ENCODE measurements at regions of chr7 and their contacts with region 1.

Region 1: GRCh38 chr7:143240291-143241168 is 18.7 kb downstream of the TAS2R40 start:
- DNase-seq: peak; percentile 85
- H3K4me3 Mint-ChIP-seq: no peak overlapping the region
- H3K27ac Mint-ChIP-seq: no peak overlapping the region
- H3K4me1 Mint-ChIP-seq: peaks cover 22% of the 10 kb centered on the region
- H3K27me3 Mint-ChIP-seq: peaks cover 1% of the 10 kb centered on the region

Region 2: DNA sequence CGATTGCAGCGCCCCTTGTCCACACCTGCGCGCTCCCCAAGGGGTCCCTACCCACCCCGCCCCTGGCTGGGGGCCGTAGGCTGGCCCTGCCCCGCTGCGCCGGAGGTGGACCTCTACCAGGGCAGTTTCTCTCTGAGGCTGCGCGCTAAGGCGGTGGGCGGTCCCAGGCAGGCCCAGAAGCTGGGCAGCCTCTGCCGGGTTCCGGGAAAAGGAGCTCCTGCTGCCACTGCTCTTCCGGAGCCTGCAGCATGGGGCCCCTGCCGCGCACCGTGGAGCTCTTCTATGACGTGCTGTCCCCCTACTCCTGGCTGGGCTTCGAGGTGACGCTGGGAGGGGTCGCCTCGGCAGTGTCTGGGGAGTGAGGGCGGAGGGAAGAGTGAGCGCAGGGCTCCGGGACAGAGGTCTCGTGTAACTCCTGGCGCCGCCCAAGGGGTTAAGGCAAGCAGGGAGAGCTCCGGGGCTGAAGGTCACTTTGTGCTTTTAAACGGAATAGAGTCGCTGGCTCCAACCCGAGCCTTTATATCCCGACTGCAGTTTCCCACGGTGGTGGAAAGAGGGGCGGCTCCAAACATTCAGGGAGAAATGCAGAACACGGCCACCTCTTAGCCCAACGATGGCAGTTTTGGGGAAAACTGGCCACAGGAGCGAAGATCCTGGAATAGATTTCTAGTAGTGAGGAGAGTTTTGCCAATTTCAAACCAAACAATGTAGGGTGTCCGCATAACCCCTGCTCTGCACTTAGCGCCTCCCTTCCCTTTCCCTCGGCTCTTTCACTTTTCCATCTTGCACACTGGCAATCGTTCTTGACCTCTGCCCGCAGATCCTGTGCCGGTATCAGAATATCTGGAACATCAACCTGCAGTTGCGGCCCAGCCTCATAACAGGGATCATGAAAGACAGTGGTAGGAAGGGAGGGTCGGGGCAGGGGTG is 23.0 kb after region 1 on chr7 and contains the start of gene GSTK1:
- CTCF ChIA-PET with region 1: interaction called, 24 read pairs
- intact Hi-C with region 1: loop called (anchors 1 kb)
- DNase-seq: peak; percentile 90
- H3K4me3 Mint-ChIP-seq: peak within 1 kb of the TSS; percentile 96
- H3K27ac Mint-ChIP-seq: peak within 1 kb of the TSS; percentile 96
- H3K4me1 Mint-ChIP-seq: peaks cover 55% of the 10 kb centered on the region
- H3K27me3 Mint-ChIP-seq: no peaks in the 10 kb centered on the region
- total RNA-seq, gene GSTK1: 186 to 187 TPM

Region 3: GRCh38 chr7:143287935-143288826 is 47.7 kb after region 1 on chr7 and contains the start of gene CASP2:
- CTCF ChIA-PET with region 1: interaction called, 21 read pairs
- intact Hi-C with region 1: loop called (anchors 1 kb)
- DNase-seq: peak; percentile 99
- H3K4me3 Mint-ChIP-seq: peak within 1 kb of the TSS; percentile 96
- H3K27ac Mint-ChIP-seq: peak within 1 kb of the TSS; percentile 88
- H3K4me1 Mint-ChIP-seq: peaks cover 48% of the 10 kb centered on the region
- H3K27me3 Mint-ChIP-seq: no peaks in the 10 kb centered on the region
- total RNA-seq, gene CASP2: 116 to 124 TPM

Region 4: DNA sequence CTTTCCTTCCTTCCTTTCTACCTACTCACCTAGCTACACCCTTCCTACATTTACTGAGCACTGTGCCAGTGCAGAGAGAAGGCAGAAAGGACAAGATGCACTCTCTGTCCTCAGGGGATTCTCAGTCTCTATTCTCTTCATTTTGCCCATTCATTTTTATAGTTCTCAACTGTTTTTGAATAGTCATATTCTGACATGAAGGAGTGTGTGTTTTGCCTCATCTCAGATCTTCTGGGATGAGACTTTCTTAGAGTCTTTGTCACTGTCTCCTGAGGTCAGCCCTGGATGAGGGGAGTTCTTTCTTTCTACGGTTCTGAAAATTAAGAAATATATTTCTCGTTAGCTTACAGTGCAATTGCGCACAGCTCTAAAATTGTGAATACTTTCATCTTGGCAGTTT is 96.7 kb after region 1 on chr7:
- CTCF ChIA-PET with region 1: interaction called, 23 read pairs
- intact Hi-C with region 1: no loop called
- DNase-seq: no peak
- H3K4me3 Mint-ChIP-seq: no peak overlapping the region
- H3K27ac Mint-ChIP-seq: no peak overlapping the region
- H3K4me1 Mint-ChIP-seq: no peaks in the 10 kb centered on the region
- H3K27me3 Mint-ChIP-seq: peaks cover 6% of the 10 kb centered on the region

Region 5: GRCh38 chr7:143380255-143380645 is 139.7 kb after region 1 on chr7:
- CTCF ChIA-PET with region 1: interaction called, 13 read pairs
- intact Hi-C with region 1: loop called (anchors 1 kb)
- DNase-seq: peak; percentile 93
- H3K4me3 Mint-ChIP-seq: peak overlapping the region; percentile 82
- H3K27ac Mint-ChIP-seq: peak overlapping the region; percentile 92
- H3K4me1 Mint-ChIP-seq: peaks cover 35% of the 10 kb centered on the region
- H3K27me3 Mint-ChIP-seq: no peaks in the 10 kb centered on the region

Region 6: GRCh38 chr7:143490717-143491306 is 250.3 kb after region 1 on chr7:
- CTCF ChIA-PET with region 1: interaction called, 4 read pairs
- intact Hi-C with region 1: loop called (anchors 2 kb)
- DNase-seq: peak; percentile 36
- H3K4me3 Mint-ChIP-seq: no peak overlapping the region
- H3K27ac Mint-ChIP-seq: no peak overlapping the region
- H3K4me1 Mint-ChIP-seq: peaks cover 30% of the 10 kb centered on the region
- H3K27me3 Mint-ChIP-seq: no peaks in the 10 kb centered on the region